H1 (cell line): ENCODE measurements at regions of chr17 and their contacts with region 1.

Region 1: GRCh38 chr17:80364216-80364618 is 50.8 kb upstream of the ENDOV start:
- DNase-seq: peak in 1 of 2 experiments; percentile 76
- H3K4me3 ChIP-seq: no peak overlapping the region
- H3K27ac ChIP-seq: no peak overlapping the region
- H3K4me1 ChIP-seq: no peaks in the 10 kb centered on the region
- H3K27me3 ChIP-seq: no peaks in the 10 kb centered on the region
- CTCF ChIP-seq: peak; percentile 59 to 69 (median 63)
- EP300 ChIP-seq: no peak
- POLR2A ChIP-seq: no peak
- RAD21 ChIP-seq: peak; percentile 56 to 70

Region 2: GRCh38 chr17:80177986-80178590 is 186.1 kb before region 1 on chr17:
- CTCF ChIA-PET with region 1: interaction called, 10 read pairs
- POLR2A ChIA-PET with region 1: no interaction called
- DNase-seq: no peak
- H3K4me3 ChIP-seq: no peak overlapping the region
- H3K27ac ChIP-seq: no peak overlapping the region
- H3K4me1 ChIP-seq: peaks cover 0 to 3% (median under 1%) of the 10 kb centered on the region in 4 experiments; a peak in 2 of 7 replicates
- H3K27me3 ChIP-seq: no peaks in the 10 kb centered on the region
- CTCF ChIP-seq: no peak
- EP300 ChIP-seq: no peak
- POLR2A ChIP-seq: no peak
- RAD21 ChIP-seq: no peak

Region 3: DNA sequence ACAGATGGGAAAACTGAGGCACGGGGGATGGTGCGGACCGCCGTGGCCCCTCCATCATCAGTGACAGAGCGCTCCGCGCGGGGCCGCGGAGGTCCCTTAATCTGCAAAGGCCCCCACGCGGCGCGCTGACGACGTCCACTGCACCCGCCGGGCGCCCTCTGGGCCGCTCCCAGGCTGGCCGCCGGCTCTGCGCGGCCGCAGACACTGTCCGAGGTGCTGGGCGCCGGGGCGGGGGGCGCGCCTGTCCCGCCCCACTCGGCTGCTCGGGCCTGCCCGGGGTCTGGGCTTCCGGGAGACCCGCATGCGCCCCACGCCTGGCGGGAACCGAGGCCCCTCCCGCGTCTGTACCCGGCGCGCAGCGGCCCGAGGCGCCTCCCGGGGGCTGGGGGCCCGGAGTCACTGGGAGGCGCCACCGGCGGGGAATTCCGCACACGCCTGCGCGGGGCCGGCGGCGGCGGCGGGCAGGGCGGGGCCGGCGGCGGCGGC is 104.1 kb before region 1 on chr17:
- CTCF ChIA-PET with region 1: no interaction called
- POLR2A ChIA-PET with region 1: no interaction called
- DNase-seq: peak in 1 of 2 experiments; percentile 81
- H3K4me3 ChIP-seq: peak overlapping the region; percentile 23 to 55 (median 42)
- H3K27ac ChIP-seq: no peak overlapping the region; the same call in 1 of the 2 replicates
- H3K4me1 ChIP-seq: peaks cover 14 to 28% (median 22%) of the 10 kb centered on the region in 4 experiments
- H3K27me3 ChIP-seq: no peaks in the 10 kb centered on the region
- CTCF ChIP-seq: no peak
- EP300 ChIP-seq: no peak
- POLR2A ChIP-seq: no peak
- RAD21 ChIP-seq: no peak

Region 4: DNA sequence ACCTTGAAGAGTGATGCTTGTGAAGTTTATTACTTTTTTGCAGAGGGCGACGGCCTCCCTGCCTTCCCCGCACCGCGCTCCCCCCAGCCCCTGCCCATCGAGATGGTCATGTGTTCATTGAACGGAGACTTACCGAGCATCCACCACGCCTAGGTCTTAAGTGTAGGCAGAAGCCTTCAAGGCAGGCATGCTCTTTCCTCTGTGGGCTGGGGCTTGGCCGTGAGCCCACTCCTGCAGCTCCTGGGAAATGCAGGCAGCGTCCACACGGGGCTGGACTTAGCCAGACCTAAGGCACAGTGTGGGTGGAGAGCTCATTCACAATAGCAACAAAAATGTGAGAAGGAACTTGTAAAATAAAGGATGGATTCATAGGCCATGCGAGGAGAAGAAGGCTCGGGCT is 84.3 kb before region 1 on chr17:
- CTCF ChIA-PET with region 1: interaction called, 10 read pairs
- POLR2A ChIA-PET with region 1: no interaction called
- DNase-seq: no peak
- H3K4me3 ChIP-seq: no peak overlapping the region
- H3K27ac ChIP-seq: no peak overlapping the region
- H3K4me1 ChIP-seq: peaks cover 0 to 6% (median 3%) of the 10 kb centered on the region in 4 experiments; a peak in 4 of 7 replicates
- H3K27me3 ChIP-seq: no peaks in the 10 kb centered on the region
- CTCF ChIP-seq: no peak
- EP300 ChIP-seq: no peak
- POLR2A ChIP-seq: no peak
- RAD21 ChIP-seq: no peak

Region 5: DNA sequence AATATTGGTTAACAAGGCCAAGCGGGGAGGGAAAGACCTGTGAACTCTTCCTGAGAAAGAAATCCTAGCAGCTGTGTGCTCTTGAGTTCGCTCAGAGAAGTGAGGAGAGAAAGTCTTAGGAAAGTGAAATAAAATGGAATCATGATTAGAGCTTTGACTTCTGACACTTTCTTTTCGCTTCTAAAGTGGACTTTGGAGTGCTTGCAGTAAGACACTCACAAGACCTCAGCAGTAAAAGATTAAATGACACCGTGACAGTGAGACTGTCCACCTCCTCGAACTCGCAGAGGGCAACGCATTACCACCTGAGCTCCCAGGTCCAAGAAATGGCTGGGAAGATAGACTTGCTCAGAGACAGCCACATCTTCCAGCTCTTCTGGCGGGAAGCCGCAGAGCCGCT is 32.4 kb before region 1 on chr17:
- CTCF ChIA-PET with region 1: interaction called, 17 read pairs
- POLR2A ChIA-PET with region 1: no interaction called
- DNase-seq: no peak
- H3K4me3 ChIP-seq: no peak overlapping the region
- H3K27ac ChIP-seq: no peak overlapping the region
- H3K4me1 ChIP-seq: no peaks in the 10 kb centered on the region
- H3K27me3 ChIP-seq: no peaks in the 10 kb centered on the region
- CTCF ChIP-seq: no peak
- EP300 ChIP-seq: no peak
- POLR2A ChIP-seq: no peak
- RAD21 ChIP-seq: no peak

Region 6: GRCh38 chr17:80349151-80349651 is 15.0 kb before region 1 on chr17:
- CTCF ChIA-PET with region 1: interaction called, 29 read pairs
- POLR2A ChIA-PET with region 1: no interaction called
- DNase-seq: no peak
- H3K4me3 ChIP-seq: no peak overlapping the region
- H3K27ac ChIP-seq: no peak overlapping the region
- H3K4me1 ChIP-seq: no peaks in the 10 kb centered on the region
- H3K27me3 ChIP-seq: no peaks in the 10 kb centered on the region; a peak in 1 of 7 replicates
- CTCF ChIP-seq: no peak
- EP300 ChIP-seq: no peak
- POLR2A ChIP-seq: no peak
- RAD21 ChIP-seq: no peak

Region 7: GRCh38 chr17:80374732-80375585 is 10.7 kb after region 1 on chr17:
- CTCF ChIA-PET with region 1: interaction called, 53 read pairs
- POLR2A ChIA-PET with region 1: interaction called, 4 read pairs
- DNase-seq: no peak
- H3K4me3 ChIP-seq: no peak overlapping the region
- H3K27ac ChIP-seq: no peak overlapping the region
- H3K4me1 ChIP-seq: peaks cover 0 to 4% (median 0%) of the 10 kb centered on the region in 4 experiments; a peak in 3 of 7 replicates
- H3K27me3 ChIP-seq: no peaks in the 10 kb centered on the region
- CTCF ChIP-seq: no peak
- EP300 ChIP-seq: no peak
- POLR2A ChIP-seq: no peak
- RAD21 ChIP-seq: no peak

Region 8: DNA sequence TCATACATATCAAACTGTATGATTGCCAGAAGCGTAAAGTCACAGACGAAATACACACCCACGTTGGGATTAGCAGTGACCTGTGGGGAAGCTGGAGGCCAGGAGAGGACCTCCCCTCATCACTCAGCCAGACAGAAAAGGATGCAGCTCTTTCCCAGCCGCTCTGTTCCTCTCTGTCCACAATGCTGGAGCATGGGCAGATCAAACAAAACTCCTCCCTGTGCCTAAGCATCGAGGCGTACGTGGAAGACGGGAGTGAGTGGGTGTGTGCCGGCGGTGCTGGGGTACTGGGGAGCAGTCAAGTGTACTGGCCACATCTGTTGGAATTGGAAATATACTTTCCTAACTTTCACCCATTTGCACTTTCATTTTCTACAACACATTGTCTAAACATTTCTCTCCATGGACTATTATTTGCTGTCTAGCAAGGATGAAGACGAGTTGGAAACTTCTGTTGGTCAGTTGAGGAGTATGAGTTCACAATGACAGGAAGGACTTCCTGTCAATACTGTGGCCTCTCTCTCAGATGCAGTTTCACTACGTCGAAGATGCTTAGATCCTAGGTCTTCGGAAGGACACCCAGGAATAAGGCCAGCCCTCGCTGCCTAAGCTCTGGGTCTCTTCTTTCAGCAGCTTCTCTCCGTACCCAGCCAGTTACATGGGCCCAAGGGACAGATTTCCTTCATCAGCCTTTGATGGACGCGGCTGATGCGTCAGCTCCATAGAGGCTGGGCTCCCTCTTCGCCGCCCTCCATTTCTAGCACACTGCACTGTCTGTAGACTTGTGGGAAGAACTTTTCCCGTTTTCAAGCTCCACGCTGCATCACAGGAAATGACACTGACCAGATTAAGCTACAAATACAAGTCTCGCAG is 20.1 kb after region 1 on chr17:
- CTCF ChIA-PET with region 1: interaction called, 11 read pairs
- POLR2A ChIA-PET with region 1: interaction called, 3 read pairs
- DNase-seq: no peak
- H3K4me3 ChIP-seq: no peak overlapping the region
- H3K27ac ChIP-seq: no peak overlapping the region
- H3K4me1 ChIP-seq: no peaks in the 10 kb centered on the region
- H3K27me3 ChIP-seq: no peaks in the 10 kb centered on the region
- CTCF ChIP-seq: no peak
- EP300 ChIP-seq: no peak
- POLR2A ChIP-seq: no peak
- RAD21 ChIP-seq: no peak